ENCODE measurements at regions of chr1 and their contacts with region 1.

Region 1: DNA sequence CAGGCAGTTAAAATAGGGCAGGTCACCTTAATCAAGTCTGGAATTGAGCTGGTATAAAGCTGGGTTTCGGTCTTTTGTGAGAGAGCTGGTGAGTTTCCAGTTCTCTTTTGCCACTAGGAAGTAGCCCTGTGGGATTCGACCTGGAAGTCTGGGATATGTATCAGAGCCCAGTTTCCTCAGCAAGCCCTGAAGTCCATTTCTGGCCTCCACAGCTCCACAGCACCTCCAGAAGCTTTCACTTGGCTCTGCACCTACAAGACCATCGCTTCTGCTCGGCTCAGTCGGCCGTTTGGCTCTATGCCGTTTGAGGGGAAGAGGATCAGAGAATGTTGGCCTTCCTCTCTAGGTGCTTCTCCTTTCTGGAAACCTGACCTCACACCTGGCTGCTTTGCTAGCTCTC is 148.0 kb downstream of the GALNT2 start:
- DNase-seq: peak in 4 of 6 donors; percentile 57 to 65 (median 62)
- ATAC-seq: peak; percentile 67 to 82 (median 77)
- H3K4me3 ChIP-seq: no peak overlapping the region
- H3K27ac ChIP-seq: peak overlapping the region; percentile 24 to 78 (median 40)
- H3K4me1 ChIP-seq: peaks cover 30 to 67% (median 34%) of the 10 kb centered on the region in 3 donors
- H3K27me3 ChIP-seq: no peaks in the 10 kb centered on the region
- CTCF ChIP-seq: peak in 3 of 4 donors; percentile 23 to 48 (median 42)

Region 2: GRCh38 chr1:229781453-229781852 is 433.6 kb before region 1 on chr1:
- intact Hi-C with region 1: loop called in 1 of 3 experiments (anchors 10 kb)
- DNase-seq: peak; percentile 73 to 93 (median 80)
- ATAC-seq: peak; percentile 94 to 99 (median 98)
- H3K4me3 ChIP-seq: no peak overlapping the region
- H3K27ac ChIP-seq: no peak overlapping the region
- H3K4me1 ChIP-seq: peaks cover 0 to 5% (median 0%) of the 10 kb centered on the region in 3 donors
- H3K27me3 ChIP-seq: no peaks in the 10 kb centered on the region
- CTCF ChIP-seq: peak in 3 of 4 donors; percentile 42 to 63 (median 57)

Measured in pancreas (tissue), 10 donors.